Heart left ventricle (tissue), 16 donors: ENCODE measurements at regions of chr2 and their contacts with region 1.

Region 1: DNA sequence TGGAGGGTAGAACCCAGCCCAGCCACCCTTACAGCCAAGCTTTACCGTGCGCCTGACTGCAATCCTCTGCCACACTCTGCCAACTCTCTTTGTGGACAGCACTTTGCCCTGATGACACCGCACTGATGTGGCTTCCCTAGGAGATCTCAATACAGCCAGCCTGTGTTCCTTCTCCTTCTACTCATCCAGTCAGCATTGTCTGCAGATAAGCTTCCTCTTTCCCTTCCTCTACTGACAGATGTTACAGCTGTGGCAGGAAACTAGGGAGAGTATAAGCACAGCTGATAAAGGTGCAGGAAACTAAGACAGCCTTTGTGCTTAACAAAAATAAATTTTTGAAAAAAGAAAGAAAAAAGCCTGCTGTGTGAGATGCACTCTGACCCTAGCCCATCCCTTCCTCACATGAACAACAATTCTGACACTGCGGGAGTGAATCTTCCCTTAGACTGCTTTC is 25.0 kb downstream of the CEP68 start:
- DNase-seq: peak in 1 of 5 donors; percentile 44
- ATAC-seq: peak; percentile 34 to 77 (median 64)
- H3K4me3 ChIP-seq: no peak overlapping the region
- H3K27ac ChIP-seq: peak overlapping the region in 7 of 12 donors; percentile 14 to 72 (median 36)
- H3K4me1 ChIP-seq: peaks cover 1 to 33% (median 20%) of the 10 kb centered on the region in 12 donors
- H3K27me3 ChIP-seq: no peaks in the 10 kb centered on the region
- CTCF ChIP-seq: no peak
- POLR2A ChIP-seq: no peak

Region 2: GRCh38 chr2:65116645-65117044 is 35.4 kb after region 1 on chr2:
- intact Hi-C with region 1: loop called in 2 of 10 experiments (anchors 5 kb)
- DNase-seq: no peak
- ATAC-seq: no peak
- H3K4me3 ChIP-seq: no peak overlapping the region
- H3K27ac ChIP-seq: no peak overlapping the region
- H3K4me1 ChIP-seq: peaks cover 8 to 86% (median 44%) of the 10 kb centered on the region in 12 donors
- H3K27me3 ChIP-seq: no peaks in the 10 kb centered on the region
- CTCF ChIP-seq: no peak
- POLR2A ChIP-seq: no peak